T-cell (primary cell): ENCODE measurements at regions of chr3 and their contacts with region 1.

Region 1: GRCh38 chr3:39288300-39288808 is 8.5 kb upstream of the CX3CR1 start:
- DNase-seq: peak; percentile 51 to 89 (median 73)
- ATAC-seq: peak; percentile 88 to 96 (median 90)
- H3K4me3 ChIP-seq: no peak overlapping the region
- H3K4me3 Mint-ChIP-seq: no peak overlapping the region
- H3K27ac ChIP-seq: peak overlapping the region; percentile 6
- H3K27ac Mint-ChIP-seq: peak overlapping the region; percentile 50
- H3K4me1 ChIP-seq: peaks cover 0 to 20% of the 10 kb centered on the region in 2 experiments
- H3K4me1 Mint-ChIP-seq: peaks cover 23 to 35% (median 25%) of the 10 kb centered on the region in 3 donors
- H3K27me3 ChIP-seq: no peaks in the 10 kb centered on the region
- H3K27me3 Mint-ChIP-seq: no peaks in the 10 kb centered on the region

Region 2: DNA sequence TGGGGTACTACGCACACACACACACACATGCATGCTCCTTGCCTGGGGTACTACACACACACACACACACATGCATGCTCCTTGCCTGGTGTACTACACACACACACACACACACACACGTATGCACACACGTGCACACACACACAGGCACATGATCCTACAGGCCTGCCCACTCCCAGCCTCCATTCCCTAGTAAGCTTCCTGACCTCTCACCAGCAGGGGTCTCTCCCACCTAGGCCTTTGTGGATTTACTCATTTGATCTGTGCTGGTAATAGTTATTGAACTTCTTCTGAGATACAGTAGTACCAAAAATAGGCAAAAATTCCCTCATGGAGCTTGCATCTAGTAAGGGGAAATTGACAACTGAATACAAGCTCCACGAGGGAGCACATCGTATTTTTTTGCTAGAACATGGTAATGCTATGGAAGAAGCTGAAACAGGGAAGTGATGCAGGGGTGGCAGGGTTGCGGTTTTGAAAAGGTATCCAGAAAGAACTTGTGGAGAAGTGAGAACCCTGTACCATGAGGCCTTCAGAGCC is 161.8 kb before region 1 on chr3:
- CTCF ChIA-PET with region 1: interaction called, 17 to 36 read pairs
- POLR2A ChIA-PET with region 1: no interaction called
- DNase-seq: peak in 8 of 35 experiments; percentile 22 to 56 (median 36)
- ATAC-seq: peak in 3 of 4 experiments; percentile 43 to 58 (median 58)
- H3K4me3 ChIP-seq: no peak overlapping the region
- H3K4me3 Mint-ChIP-seq: no peak overlapping the region
- H3K27ac ChIP-seq: no peak overlapping the region
- H3K27ac Mint-ChIP-seq: peak overlapping the region in 1 of 2 donors; percentile 28
- H3K4me1 ChIP-seq: peaks cover 10 to 21% of the 10 kb centered on the region in 2 experiments
- H3K4me1 Mint-ChIP-seq: peaks cover 24 to 32% (median 25%) of the 10 kb centered on the region in 3 donors
- H3K27me3 ChIP-seq: peaks cover 0 to 3% of the 10 kb centered on the region in 2 experiments
- H3K27me3 Mint-ChIP-seq: no peaks in the 10 kb centered on the region

Region 3: GRCh38 chr3:39189959-39190269 is 98.4 kb before region 1 on chr3:
- CTCF ChIA-PET with region 1: interaction called, 48 to 82 read pairs
- POLR2A ChIA-PET with region 1: no interaction called
- DNase-seq: peak in 31 of 35 experiments; percentile 14 to 82 (median 43)
- ATAC-seq: peak in 3 of 4 experiments; percentile 66 to 78 (median 66)
- H3K4me3 ChIP-seq: no peak overlapping the region
- H3K4me3 Mint-ChIP-seq: no peak overlapping the region
- H3K27ac ChIP-seq: no peak overlapping the region
- H3K27ac Mint-ChIP-seq: no peak overlapping the region
- H3K4me1 ChIP-seq: peaks cover 0 to 16% of the 10 kb centered on the region in 2 experiments
- H3K4me1 Mint-ChIP-seq: peaks cover 6 to 7% (median 6%) of the 10 kb centered on the region in 3 donors
- H3K27me3 ChIP-seq: no peaks in the 10 kb centered on the region
- H3K27me3 Mint-ChIP-seq: peaks cover 0 to 2% of the 10 kb centered on the region in 2 donors

Region 4: GRCh38 chr3:39267631-39268548 is 20.5 kb before region 1 on chr3:
- CTCF ChIA-PET with region 1: interaction called, 6 to 18 read pairs
- POLR2A ChIA-PET with region 1: no interaction called
- DNase-seq: peak; percentile 9 to 88 (median 64)
- ATAC-seq: peak; percentile 71 to 97 (median 86)
- H3K4me3 ChIP-seq: no peak overlapping the region
- H3K4me3 Mint-ChIP-seq: peak overlapping the region; percentile 46 to 58 (median 50)
- H3K27ac ChIP-seq: peak overlapping the region; percentile 79
- H3K27ac Mint-ChIP-seq: peak overlapping the region; percentile 82 to 88
- H3K4me1 ChIP-seq: peaks cover 8 to 83% of the 10 kb centered on the region in 2 experiments
- H3K4me1 Mint-ChIP-seq: peaks cover 20 to 66% (median 23%) of the 10 kb centered on the region in 3 donors
- H3K27me3 ChIP-seq: no peaks in the 10 kb centered on the region
- H3K27me3 Mint-ChIP-seq: no peaks in the 10 kb centered on the region

Region 5: GRCh38 chr3:39378088-39378487 is 89.7 kb after region 1 on chr3:
- CTCF ChIA-PET with region 1: interaction called, 6 to 18 read pairs
- POLR2A ChIA-PET with region 1: no interaction called
- DNase-seq: peak; percentile 15 to 79 (median 50)
- ATAC-seq: peak; percentile 62 to 81 (median 79)
- H3K4me3 ChIP-seq: no peak overlapping the region
- H3K4me3 Mint-ChIP-seq: no peak overlapping the region
- H3K27ac ChIP-seq: no peak overlapping the region
- H3K27ac Mint-ChIP-seq: no peak overlapping the region
- H3K4me1 ChIP-seq: peaks cover 9 to 10% of the 10 kb centered on the region in 2 experiments
- H3K4me1 Mint-ChIP-seq: peaks cover 7 to 15% (median 13%) of the 10 kb centered on the region in 3 donors
- H3K27me3 ChIP-seq: peaks cover 0 to 3% of the 10 kb centered on the region in 2 experiments
- H3K27me3 Mint-ChIP-seq: no peaks in the 10 kb centered on the region

Region 6: DNA sequence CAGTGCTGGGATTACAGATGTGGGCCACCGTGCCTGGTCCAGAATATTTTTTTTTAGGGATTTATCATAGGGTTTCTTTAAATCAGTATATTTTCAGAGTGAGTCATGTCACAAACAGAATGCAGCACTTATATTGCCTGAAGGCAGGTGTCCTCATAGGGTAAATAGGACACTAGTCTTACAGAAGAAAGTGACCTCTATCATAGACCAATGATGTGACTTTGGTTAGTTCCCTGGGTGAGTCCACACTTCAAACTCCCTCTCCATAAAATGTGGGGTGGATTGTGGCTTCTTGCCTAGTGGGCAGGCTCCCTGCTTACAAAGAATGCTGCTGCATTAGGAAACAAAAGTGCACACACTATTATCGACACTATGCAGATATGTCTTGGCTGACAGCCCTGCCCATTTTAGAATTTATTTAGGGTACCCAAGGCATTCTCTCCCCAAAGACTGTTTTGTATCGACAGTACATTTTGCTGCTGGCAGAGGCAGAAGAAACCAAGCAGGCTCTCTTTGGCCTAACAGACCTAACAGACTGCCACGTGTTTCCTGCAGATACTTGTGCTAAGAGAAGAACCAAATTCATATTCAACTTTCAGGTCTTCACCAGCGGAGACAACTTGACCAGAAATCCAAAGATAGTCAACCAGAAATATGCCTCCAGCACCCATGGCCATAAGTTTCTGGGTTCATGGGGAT is 304.1 kb after region 1 on chr3:
- CTCF ChIA-PET with region 1: no interaction called
- POLR2A ChIA-PET with region 1: no interaction called
- DNase-seq: no peak
- ATAC-seq: no peak
- H3K4me3 ChIP-seq: no peak overlapping the region
- H3K4me3 Mint-ChIP-seq: no peak overlapping the region
- H3K27ac ChIP-seq: no peak overlapping the region
- H3K27ac Mint-ChIP-seq: no peak overlapping the region
- H3K4me1 ChIP-seq: no peaks in the 10 kb centered on the region
- H3K4me1 Mint-ChIP-seq: no peaks in the 10 kb centered on the region
- H3K27me3 ChIP-seq: no peaks in the 10 kb centered on the region
- H3K27me3 Mint-ChIP-seq: peaks cover 1 to 13% of the 10 kb centered on the region in 2 donors